ENCODE measurements at regions of chr2 and their contacts with region 1.

Region 1: DNA sequence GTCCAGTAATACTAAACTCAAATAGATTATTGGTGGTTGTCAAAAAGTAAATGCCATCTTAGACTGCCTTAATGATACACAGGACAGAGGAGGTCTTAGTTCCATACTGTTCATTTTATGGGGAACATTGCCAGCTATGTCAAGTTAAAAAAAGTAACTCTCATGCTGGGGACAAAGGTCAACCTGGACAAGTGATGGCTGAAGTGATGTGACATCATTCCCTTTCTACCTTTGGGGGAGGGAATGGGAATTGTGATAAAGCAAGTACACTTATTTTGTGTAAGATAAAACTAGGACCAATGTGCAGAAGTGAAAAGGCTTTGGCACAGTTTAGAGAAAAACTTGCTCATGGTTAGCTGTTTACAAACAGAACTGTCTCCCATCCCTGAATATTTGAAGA is 24.0 kb upstream of the SNORC start:
- DNase-seq: no peak
- H3K4me3 ChIP-seq: no peak overlapping the region
- H3K27ac ChIP-seq: no peak overlapping the region
- H3K4me1 ChIP-seq: no peaks in the 10 kb centered on the region
- CTCF ChIP-seq: no peak

Region 2: DNA sequence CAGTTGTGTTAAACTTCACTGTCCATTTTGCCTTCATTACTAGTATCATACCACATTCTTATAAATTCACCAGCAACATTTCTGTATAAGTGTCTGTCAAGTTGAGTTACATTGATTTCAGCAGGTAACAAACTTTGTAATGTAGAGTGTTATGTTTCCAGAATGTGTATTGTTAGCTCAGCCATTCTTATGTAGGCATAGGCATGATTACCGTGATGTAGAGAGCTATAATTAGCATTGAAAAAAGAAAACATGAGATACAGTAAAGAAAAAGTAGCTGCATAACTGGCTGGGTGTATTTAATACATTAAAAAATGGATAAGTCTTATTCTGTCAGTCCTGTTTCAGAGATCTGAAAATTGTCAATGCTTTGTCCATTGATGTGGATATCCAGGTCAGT is 78.2 kb before region 1 on chr2:
- CTCF ChIA-PET with region 1: no interaction called
- POLR2A ChIA-PET with region 1: interaction called, 5 read pairs
- intact Hi-C with region 1: loop called (anchors 5 kb)
- DNase-seq: no peak
- H3K4me3 ChIP-seq: no peak overlapping the region
- H3K27ac ChIP-seq: no peak overlapping the region
- H3K4me1 ChIP-seq: peaks cover 23% of the 10 kb centered on the region
- CTCF ChIP-seq: no peak

Region 3: DNA sequence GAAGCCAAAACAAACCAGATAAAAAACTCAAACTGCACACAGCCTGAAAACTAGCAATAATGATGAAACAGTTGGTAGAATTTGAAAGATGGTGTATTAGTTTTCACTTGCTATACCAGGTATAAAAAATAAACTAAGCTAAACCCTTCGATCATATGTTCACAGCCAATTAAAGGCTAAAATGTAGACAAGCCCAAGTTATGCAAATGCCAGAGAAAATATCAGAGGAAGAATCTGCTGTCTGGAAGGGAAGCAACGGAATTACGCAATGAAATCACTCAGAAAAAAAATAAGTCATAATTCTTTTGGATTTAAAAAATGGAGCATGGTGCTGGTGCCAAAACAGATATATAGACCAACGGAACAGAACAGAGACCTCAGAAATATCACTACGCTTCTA is 1542.5 kb after region 1 on chr2:
- CTCF ChIA-PET with region 1: no interaction called
- POLR2A ChIA-PET with region 1: no interaction called
- intact Hi-C with region 1: no loop called
- DNase-seq: no peak
- H3K4me3 ChIP-seq: no peak overlapping the region
- H3K27ac ChIP-seq: no peak overlapping the region
- H3K4me1 ChIP-seq: peaks cover 4% of the 10 kb centered on the region
- CTCF ChIP-seq: no peak

Measured in OCI-LY7 (cell line).